B cell (primary cell): ENCODE measurements at regions of chr12 and their contacts with region 1.

Region 1: DNA sequence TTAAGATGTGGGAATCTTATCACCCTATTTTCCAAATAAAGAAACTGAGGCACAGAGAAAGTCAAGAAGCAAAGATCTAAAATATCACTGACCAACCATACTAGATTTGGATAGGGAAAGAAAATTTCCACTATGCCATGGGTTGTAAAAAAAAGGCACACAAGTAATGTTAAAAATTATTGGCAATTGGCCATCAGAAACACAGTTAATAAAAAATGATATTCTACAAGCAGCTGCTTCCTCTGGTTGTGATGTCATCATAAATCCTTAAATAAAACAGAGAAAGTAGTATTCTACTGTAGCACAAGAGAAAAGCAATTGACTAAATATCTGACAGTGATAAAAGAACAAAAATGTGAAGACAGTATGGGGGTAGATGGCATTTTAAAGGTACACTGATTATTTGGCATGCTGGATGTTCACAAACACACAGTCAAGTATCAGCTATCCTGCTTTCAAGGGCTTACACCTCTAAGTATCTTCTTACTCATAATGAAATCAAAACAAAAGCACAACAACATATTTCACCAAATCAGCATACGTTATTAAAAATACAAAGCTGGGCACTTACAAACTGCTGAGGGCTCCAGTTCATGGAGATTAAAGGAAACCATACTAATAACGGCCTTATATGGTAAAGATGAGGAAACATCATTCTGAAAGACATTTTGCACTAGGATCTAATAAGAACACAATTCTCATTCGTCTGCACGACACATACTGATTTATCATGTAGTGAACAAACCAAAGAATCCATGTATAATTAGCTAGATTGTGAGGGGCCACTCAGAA is 45.7 kb downstream of the CORO1C start:
- DNase-seq: no peak
- ATAC-seq: no peak
- H3K4me3 ChIP-seq: no peak overlapping the region
- H3K4me3 Mint-ChIP-seq: no peak overlapping the region
- H3K27ac ChIP-seq: no peak overlapping the region
- H3K27ac Mint-ChIP-seq: no peak overlapping the region
- H3K4me1 ChIP-seq: peaks cover 15 to 17% of the 10 kb centered on the region in 2 donors
- H3K4me1 Mint-ChIP-seq: peaks cover 38% of the 10 kb centered on the region
- H3K27me3 ChIP-seq: no peaks in the 10 kb centered on the region
- H3K27me3 Mint-ChIP-seq: no peaks in the 10 kb centered on the region
- CTCF ChIP-seq: no peak

Region 2: DNA sequence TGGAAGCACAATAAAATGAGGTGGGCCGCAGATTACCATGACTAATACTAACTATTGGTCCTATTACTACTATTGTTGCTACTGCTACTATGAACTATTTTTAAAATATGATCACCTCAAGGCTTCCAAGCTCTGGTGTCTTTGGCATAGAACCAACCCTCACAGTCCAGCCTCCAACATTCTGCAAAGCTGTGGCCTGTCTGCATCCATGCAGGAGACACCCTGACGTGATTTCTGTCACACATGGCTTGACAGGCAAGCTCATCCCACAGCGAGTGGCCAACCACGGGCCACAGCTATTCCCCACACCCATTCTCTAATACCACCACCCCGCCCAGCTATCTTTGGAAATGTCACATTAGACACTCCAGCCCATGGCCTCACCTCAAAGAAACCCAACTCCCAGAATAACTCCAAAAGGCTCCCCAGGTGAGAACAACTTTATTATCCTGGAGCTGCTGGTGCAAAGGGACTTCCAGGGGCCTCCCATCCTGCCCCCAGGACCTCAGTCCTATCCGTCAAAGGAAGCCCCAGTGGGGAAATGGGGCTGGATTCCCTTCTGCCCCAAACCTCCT is 108.9 kb before region 1 on chr12:
- CTCF ChIA-PET with region 1: no interaction called
- POLR2A ChIA-PET with region 1: no interaction called
- intact Hi-C with region 1: no loop called
- DNase-seq: no peak
- ATAC-seq: no peak
- H3K4me3 ChIP-seq: no peak overlapping the region
- H3K4me3 Mint-ChIP-seq: no peak overlapping the region
- H3K27ac ChIP-seq: no peak overlapping the region
- H3K27ac Mint-ChIP-seq: no peak overlapping the region
- H3K4me1 ChIP-seq: peaks cover 21 to 27% of the 10 kb centered on the region in 2 donors
- H3K4me1 Mint-ChIP-seq: peaks cover 51% of the 10 kb centered on the region
- H3K27me3 ChIP-seq: no peaks in the 10 kb centered on the region
- H3K27me3 Mint-ChIP-seq: no peaks in the 10 kb centered on the region
- CTCF ChIP-seq: no peak

Region 3: GRCh38 chr12:108768591-108769500 is 83.2 kb after region 1 on chr12:
- CTCF ChIA-PET with region 1: no interaction called
- POLR2A ChIA-PET with region 1: interaction called, 11 read pairs
- intact Hi-C with region 1: no loop called
- DNase-seq: peak; percentile 72
- ATAC-seq: peak; percentile 92
- H3K4me3 ChIP-seq: peak overlapping the region in 4 of 5 experiments; percentile 36 to 55 (median 50)
- H3K4me3 Mint-ChIP-seq: peak overlapping the region; percentile 80
- H3K27ac ChIP-seq: no peak overlapping the region
- H3K27ac Mint-ChIP-seq: peak overlapping the region; percentile 32
- H3K4me1 ChIP-seq: peaks cover 16 to 20% of the 10 kb centered on the region in 2 donors
- H3K4me1 Mint-ChIP-seq: peaks cover 26% of the 10 kb centered on the region
- H3K27me3 ChIP-seq: peaks cover 0 to 7% (median 1%) of the 10 kb centered on the region in 4 experiments
- H3K27me3 Mint-ChIP-seq: peaks cover 4% of the 10 kb centered on the region
- CTCF ChIP-seq: no peak